ENCODE measurements at regions of chr19 and their contacts with region 1.

Region 1: DNA sequence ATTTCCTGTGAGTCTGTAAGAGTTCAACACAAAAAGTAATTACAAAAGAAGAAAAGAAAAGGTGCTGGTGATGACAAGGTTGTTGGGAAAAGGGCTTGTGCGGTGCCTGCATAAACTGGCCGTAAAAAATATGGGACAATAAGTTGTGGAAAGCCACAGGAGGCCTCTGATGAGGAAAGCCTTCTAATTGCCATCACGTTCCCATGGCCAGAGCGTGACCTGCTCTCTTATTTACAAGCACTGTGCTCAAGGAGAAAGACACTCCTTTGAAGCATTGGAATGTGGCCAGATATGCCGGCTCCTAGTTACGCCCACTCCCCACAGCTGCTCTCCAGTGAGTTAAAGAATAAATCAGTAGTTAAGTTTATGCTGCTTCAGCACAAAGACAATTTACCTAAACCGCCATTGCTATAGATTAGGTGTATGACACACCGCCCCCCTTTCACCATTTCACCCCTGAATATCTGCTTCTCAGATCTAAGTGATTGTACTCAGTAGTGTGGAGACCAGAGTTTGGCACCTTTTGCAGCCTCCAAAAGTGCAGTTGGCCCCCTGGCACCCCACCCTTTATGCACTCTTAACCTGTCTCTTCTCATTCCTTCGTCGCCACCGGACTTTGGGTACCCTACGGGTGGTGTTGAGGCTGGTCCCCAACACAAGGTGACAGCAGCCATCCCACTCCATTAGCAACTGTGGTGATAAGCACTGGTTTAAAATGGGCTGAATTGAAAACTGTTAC is 8.1 kb upstream of the PGLYRP1 start:
- DNase-seq: no peak
- H3K4me3 ChIP-seq: no peak overlapping the region
- H3K4me3 Mint-ChIP-seq: no peak overlapping the region
- H3K27ac ChIP-seq: no peak overlapping the region
- H3K27ac Mint-ChIP-seq: peak overlapping the region in 1 of 7 donors; percentile 78
- H3K4me1 ChIP-seq: peaks cover 9% of the 10 kb centered on the region in 2 donors
- H3K4me1 Mint-ChIP-seq: peaks cover 12% of the 10 kb centered on the region
- H3K27me3 ChIP-seq: peaks cover 0 to 8% of the 10 kb centered on the region in 2 donors
- H3K27me3 Mint-ChIP-seq: peaks cover 22 to 54% (median 23%) of the 10 kb centered on the region in 3 donors
- CTCF ChIP-seq: no peak

Region 2: GRCh38 chr19:46265217-46265828 is 234.3 kb after region 1 on chr19:
- intact Hi-C with region 1: loop called (anchors 2 kb)
- DNase-seq: peak; percentile 54 to 75 (median 61)
- H3K4me3 ChIP-seq: no peak overlapping the region
- H3K4me3 Mint-ChIP-seq: no peak overlapping the region
- H3K27ac ChIP-seq: no peak overlapping the region
- H3K27ac Mint-ChIP-seq: no peak overlapping the region
- H3K4me1 ChIP-seq: peaks cover 4 to 10% of the 10 kb centered on the region in 2 donors
- H3K4me1 Mint-ChIP-seq: peaks cover 8% of the 10 kb centered on the region
- H3K27me3 ChIP-seq: peaks cover under 1 to 10% of the 10 kb centered on the region in 2 donors
- H3K27me3 Mint-ChIP-seq: peaks cover 39 to 45% (median 43%) of the 10 kb centered on the region in 3 donors
- CTCF ChIP-seq: peak; percentile 90

Measured in CD14-positive monocyte (primary cell).